ENCODE measurements at regions of chr17 and their contacts with region 1.

Region 1: DNA sequence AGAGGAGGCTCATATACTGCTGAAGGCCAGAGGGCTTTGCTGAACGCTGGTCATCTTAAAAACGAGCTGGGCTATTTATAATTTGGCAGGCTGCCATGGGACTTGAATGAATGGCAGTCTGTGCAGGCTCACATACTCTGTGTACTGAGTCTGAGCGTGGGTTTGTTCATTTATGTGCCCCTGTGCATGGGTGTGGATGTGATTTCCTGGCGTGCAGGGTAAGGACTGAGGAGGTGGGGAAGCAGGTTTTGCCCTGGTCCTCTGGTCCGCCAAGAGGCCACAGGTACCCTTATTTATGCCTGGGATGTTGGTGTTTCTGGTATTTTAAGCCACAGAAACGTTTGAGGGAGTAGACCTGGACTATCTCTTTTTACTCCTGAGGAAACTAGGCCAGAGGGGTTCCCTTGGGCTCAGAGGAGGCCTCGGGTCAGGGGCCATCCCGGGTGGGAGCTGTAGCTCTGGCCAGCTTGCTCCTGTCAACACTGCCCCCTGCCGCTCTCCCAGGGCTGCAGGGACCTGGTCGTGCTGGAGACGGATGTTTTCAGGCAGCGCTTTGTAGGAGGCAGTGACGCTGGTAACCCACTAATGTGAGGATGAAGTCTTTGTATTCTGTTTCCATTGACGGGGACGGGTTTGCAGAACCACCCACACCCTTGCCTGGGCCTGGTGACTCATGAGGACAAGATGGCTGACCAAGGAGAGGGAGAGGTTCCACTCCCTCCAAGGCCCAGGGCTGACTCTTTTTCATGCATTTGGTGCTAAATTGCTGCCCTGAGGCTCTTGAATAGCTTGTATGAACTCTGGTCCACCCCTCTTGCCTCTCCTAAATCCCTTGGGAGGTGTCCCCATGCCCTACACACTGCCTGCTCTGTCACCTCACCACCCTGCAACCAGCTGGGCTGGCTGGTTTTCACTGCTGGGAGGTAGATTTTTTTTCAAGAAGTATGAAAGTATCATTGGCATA is 184.5 kb downstream of the MSI2 start:
- DNase-seq: peak; percentile 21 to 82
- H3K4me3 ChIP-seq: no peak overlapping the region
- H3K27ac ChIP-seq: 0 out of 2 replicates have a peak overlapping the region, but pooled peaks have one; percentile 4
- H3K4me1 ChIP-seq: peaks cover 4 to 24% (median 9%) of the 10 kb centered on the region in 4 experiments
- H3K27me3 ChIP-seq: no peaks in the 10 kb centered on the region
- CTCF ChIP-seq: peak; percentile 64 to 68 (median 67)
- EP300 ChIP-seq: no peak
- POLR2A ChIP-seq: no peak
- RAD21 ChIP-seq: peak; percentile 60 to 75

Region 2: GRCh38 chr17:57255776-57256681 is 184.8 kb before region 1 on chr17 and contains the start of gene MSI2:
- CTCF ChIA-PET with region 1: interaction called, 10 read pairs
- POLR2A ChIA-PET with region 1: no interaction called
- DNase-seq: peak in 1 of 2 experiments; percentile 87
- H3K4me3 ChIP-seq: peak within 1 kb of the TSS; percentile 72 to 94 (median 74)
- H3K27ac ChIP-seq: peak within 1 kb of the TSS; percentile 70; the same call in 1 of the 2 replicates
- H3K4me1 ChIP-seq: peaks cover 4 to 30% (median 6%) of the 10 kb centered on the region in 4 experiments; a peak in 6 of 7 replicates
- H3K27me3 ChIP-seq: peaks cover 2 to 10% (median 8%) of the 10 kb centered on the region in 4 experiments; a peak in 6 of 7 replicates
- CTCF ChIP-seq: peak in 1 of 3 experiments; percentile 10; a peak in 1 of 4 replicates
- EP300 ChIP-seq: no peak
- POLR2A ChIP-seq: no peak
- RAD21 ChIP-seq: peak in 1 of 2 experiments; percentile 8; a peak in 1 of 4 replicates
- total RNA-seq, gene MSI2: 73.1 and 80.6 TPM in 2 replicates

Region 3: DNA sequence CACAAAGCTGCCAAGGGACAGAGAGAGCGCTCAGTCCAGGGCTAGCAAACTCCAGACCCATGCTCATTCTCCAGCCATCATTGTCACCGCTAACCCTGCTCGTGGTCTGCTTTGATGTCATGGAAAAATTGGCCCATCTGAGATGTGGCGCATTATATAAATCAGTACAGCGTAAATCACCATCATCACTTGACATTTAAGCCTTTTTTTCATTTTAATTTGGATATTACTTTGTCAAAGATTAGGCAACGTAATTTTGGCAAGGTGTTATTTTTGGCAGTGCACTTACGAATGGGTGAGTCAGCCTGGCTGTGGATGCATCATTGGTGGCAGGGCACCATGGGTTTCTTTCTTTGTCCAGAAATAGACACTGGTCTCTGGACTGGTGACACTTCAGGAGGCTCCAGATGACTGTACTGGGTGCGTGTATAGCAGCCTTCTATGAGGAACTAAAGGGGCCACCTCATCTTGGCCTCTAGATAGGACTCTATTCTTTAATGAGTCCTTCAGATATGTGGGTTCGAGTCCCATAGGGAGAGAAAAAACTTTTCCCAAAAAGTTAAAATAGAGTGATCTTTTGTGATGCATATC is 18.1 kb before region 1 on chr17:
- CTCF ChIA-PET with region 1: interaction called, 13 read pairs
- POLR2A ChIA-PET with region 1: interaction called, 3 read pairs
- DNase-seq: no peak
- H3K4me3 ChIP-seq: no peak overlapping the region
- H3K27ac ChIP-seq: no peak overlapping the region
- H3K4me1 ChIP-seq: peaks cover 6 to 17% (median 11%) of the 10 kb centered on the region in 4 experiments; a peak in 6 of 7 replicates
- H3K27me3 ChIP-seq: no peaks in the 10 kb centered on the region
- CTCF ChIP-seq: no peak
- EP300 ChIP-seq: no peak
- POLR2A ChIP-seq: no peak
- RAD21 ChIP-seq: no peak

Region 4: DNA sequence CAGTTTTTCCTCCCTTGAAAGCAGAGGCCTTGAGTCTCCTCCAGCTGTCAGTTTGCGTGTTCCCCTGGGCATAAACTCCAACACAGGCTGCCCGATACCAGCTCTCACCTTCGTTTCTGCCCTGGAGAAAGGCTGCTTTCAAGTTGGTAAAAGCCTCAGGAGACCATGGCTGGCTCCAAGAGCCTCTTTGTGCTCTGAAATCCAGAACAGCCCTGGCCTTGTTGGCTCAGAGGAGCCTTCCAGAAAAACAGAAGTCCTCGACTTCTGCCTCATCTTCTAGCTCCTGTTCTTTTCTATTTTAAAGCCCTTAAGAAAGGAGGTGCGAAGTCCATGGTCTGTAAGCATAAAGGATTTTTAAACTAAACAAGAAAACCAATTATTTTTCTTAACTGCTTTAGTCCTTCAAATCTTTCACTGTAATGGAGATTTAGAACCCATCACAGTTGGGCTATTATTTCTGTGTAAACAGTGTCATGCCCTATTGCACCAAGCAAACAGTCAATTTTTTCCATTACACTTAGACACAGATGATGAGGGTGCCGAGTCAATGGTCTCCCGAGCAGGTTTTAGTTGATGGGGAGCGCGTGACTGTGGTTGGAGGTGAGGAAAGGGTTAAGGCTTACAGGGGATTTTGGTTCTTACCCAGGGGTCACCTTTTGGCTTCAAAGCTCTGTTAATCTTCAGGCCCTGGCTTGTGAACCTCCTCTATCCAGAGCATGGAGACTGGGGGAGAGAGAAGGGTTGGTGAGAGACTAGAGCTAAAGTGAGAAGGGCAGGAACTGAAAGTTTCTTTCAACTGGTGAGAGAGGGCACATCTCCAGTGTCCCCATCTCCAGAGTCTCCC is 28.4 kb after region 1 on chr17:
- CTCF ChIA-PET with region 1: interaction called, 12 read pairs
- POLR2A ChIA-PET with region 1: no interaction called
- DNase-seq: no peak
- H3K4me3 ChIP-seq: no peak overlapping the region
- H3K27ac ChIP-seq: no peak overlapping the region
- H3K4me1 ChIP-seq: peaks cover 10 to 47% (median 43%) of the 10 kb centered on the region in 4 experiments
- H3K27me3 ChIP-seq: no peaks in the 10 kb centered on the region
- CTCF ChIP-seq: no peak
- EP300 ChIP-seq: no peak
- POLR2A ChIP-seq: no peak
- RAD21 ChIP-seq: no peak

Region 5: GRCh38 chr17:57486873-57487301 is 46.1 kb after region 1 on chr17:
- CTCF ChIA-PET with region 1: interaction called, 13 read pairs
- POLR2A ChIA-PET with region 1: interaction called, 3 read pairs
- DNase-seq: no peak
- H3K4me3 ChIP-seq: no peak overlapping the region
- H3K27ac ChIP-seq: no peak overlapping the region
- H3K4me1 ChIP-seq: peaks cover 0 to 7% (median 2%) of the 10 kb centered on the region in 4 experiments; a peak in 4 of 7 replicates
- H3K27me3 ChIP-seq: no peaks in the 10 kb centered on the region; a peak in 2 of 7 replicates
- CTCF ChIP-seq: no peak
- EP300 ChIP-seq: no peak
- POLR2A ChIP-seq: no peak
- RAD21 ChIP-seq: no peak

Region 6: GRCh38 chr17:57541472-57542394 is 100.9 kb after region 1 on chr17:
- CTCF ChIA-PET with region 1: interaction called, 13 read pairs
- POLR2A ChIA-PET with region 1: no interaction called
- DNase-seq: no peak
- H3K4me3 ChIP-seq: no peak overlapping the region
- H3K27ac ChIP-seq: no peak overlapping the region
- H3K4me1 ChIP-seq: peaks cover 2 to 29% (median 13%) of the 10 kb centered on the region in 4 experiments; a peak in 6 of 7 replicates
- H3K27me3 ChIP-seq: no peaks in the 10 kb centered on the region
- CTCF ChIP-seq: peak in 1 of 3 experiments; percentile 23; a peak in 1 of 4 replicates
- EP300 ChIP-seq: no peak
- POLR2A ChIP-seq: no peak
- RAD21 ChIP-seq: no peak